ENCODE measurements at regions of chr1 and their contacts with region 1.

Region 1: DNA sequence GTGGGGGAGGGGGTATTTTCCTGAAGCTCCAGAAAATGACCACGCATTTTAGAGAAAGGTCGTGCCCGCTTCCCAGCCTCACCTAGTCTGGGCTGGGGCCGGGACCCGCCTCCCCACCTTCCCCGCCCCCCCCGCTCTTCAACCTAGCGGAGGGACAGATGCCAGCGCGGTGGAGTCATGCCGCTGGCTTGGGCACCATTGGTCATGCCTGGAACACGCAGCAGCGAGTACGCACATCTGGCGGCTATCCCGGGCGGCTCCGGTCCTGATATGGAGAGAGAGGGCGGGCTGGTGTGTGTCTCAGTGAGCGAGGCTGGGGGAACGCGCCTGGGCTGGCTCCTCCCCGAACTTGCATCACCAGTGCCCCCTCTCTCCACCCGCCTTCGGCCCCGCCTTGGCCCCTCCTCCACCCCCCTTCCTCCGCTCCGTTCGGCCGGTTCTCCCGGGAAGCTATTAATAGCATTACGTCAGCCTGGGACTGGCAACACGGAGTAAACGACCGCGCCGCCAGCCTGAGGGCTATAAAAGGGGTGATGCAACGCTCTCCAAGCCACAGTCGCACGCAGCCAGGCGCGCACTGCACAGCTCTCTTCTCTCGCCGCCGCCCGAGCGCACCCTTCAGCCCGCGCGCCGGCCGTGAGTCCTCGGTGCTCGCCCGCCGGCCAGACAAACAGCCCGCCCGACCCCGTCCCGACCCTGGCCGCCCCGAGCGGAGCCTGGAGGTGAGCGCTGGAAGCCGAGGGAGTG is at the start of gene ATF3:
- DNase-seq: peak; percentile 100
- ATAC-seq: peak; percentile 76
- H3K4me3 ChIP-seq: peak within 1 kb of the TSS; percentile 83
- H3K27ac ChIP-seq: peak within 1 kb of the TSS; percentile 56
- H3K4me1 ChIP-seq: peaks cover 37% of the 10 kb centered on the region
- H3K27me3 ChIP-seq: peaks cover 40% of the 10 kb centered on the region
- CTCF ChIP-seq: no peak
- total RNA-seq, gene ATF3: 275 and 335 TPM in 2 replicates

Region 2: GRCh38 chr1:212291505-212292134 is 316.8 kb before region 1 on chr1:
- CTCF ChIA-PET with region 1: interaction called, 5 read pairs
- POLR2A ChIA-PET with region 1: no interaction called
- intact Hi-C with region 1: loop called (anchors 5 kb)
- DNase-seq: peak; percentile 84
- ATAC-seq: peak; percentile 52
- H3K4me3 ChIP-seq: no peak overlapping the region
- H3K27ac ChIP-seq: no peak overlapping the region
- H3K4me1 ChIP-seq: peaks cover 45% of the 10 kb centered on the region
- H3K27me3 ChIP-seq: no peaks in the 10 kb centered on the region
- CTCF ChIP-seq: peak; percentile 99

Region 3: GRCh38 chr1:212488397-212489283 is 119.7 kb before region 1 on chr1:
- CTCF ChIA-PET with region 1: no interaction called
- POLR2A ChIA-PET with region 1: interaction called, 10 read pairs
- intact Hi-C with region 1: loop called (anchors 1 kb)
- DNase-seq: peak; percentile 76
- ATAC-seq: no peak; the same call in 1 of the 2 replicates
- H3K4me3 ChIP-seq: no peak overlapping the region
- H3K27ac ChIP-seq: peak overlapping the region; percentile 92
- H3K4me1 ChIP-seq: peaks cover 49% of the 10 kb centered on the region
- H3K27me3 ChIP-seq: no peaks in the 10 kb centered on the region
- CTCF ChIP-seq: no peak

Region 4: GRCh38 chr1:212578041-212578440 is 30.3 kb before region 1 on chr1:
- CTCF ChIA-PET with region 1: no interaction called
- POLR2A ChIA-PET with region 1: interaction called, 20 read pairs
- intact Hi-C with region 1: no loop called
- DNase-seq: no peak
- ATAC-seq: no peak
- H3K4me3 ChIP-seq: no peak overlapping the region
- H3K27ac ChIP-seq: no peak overlapping the region
- H3K4me1 ChIP-seq: 0 out of 2 replicates have a peak, but pooled peaks cover 6% of the 10 kb centered on the region
- H3K27me3 ChIP-seq: no peaks in the 10 kb centered on the region
- CTCF ChIP-seq: no peak

Region 5: GRCh38 chr1:212721388-212722247 is 113.2 kb after region 1 on chr1:
- CTCF ChIA-PET with region 1: no interaction called
- POLR2A ChIA-PET with region 1: interaction called, 4 read pairs
- intact Hi-C with region 1: loop called (anchors 5 kb)
- DNase-seq: peak; percentile 99
- ATAC-seq: peak; percentile 97
- H3K4me3 ChIP-seq: peak overlapping the region; percentile 47
- H3K27ac ChIP-seq: peak overlapping the region; percentile 68
- H3K4me1 ChIP-seq: peaks cover 17% of the 10 kb centered on the region
- H3K27me3 ChIP-seq: no peaks in the 10 kb centered on the region
- CTCF ChIP-seq: no peak; the same call in 1 of the 2 replicates